Activated CD8-positive, alpha-beta T cell treated with anti-CD3 and anti-CD28 coated beads, Interleukin-2, amount 10 ng/mL, durations not matched to agents 7 days and 5 days (primary cell): ENCODE measurements at regions of chr1 and their contacts with region 1.

Region 1: DNA sequence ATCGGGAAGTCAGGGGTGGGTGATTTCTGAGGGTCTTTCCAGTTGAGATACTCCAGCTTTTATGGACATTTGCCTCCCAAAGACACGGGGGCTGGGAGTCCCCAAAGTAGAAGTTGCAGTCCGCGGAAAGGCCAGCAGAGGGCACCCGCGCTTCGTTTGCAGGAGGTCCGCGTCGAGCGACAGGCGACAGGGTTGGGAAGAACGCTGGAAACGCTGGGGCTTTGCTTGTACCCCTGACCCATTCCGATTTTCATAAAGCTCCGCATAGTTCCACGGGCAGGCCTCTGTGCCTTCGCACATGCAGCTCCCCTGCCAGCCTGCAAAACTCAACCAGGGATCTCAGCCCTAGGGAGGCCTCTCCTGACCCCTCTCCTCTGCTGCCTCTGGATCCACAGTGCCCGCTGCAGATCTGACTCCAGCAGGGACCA is 44.2 kb upstream of the LAPTM5 start:
- DNase-seq: peak; percentile 83
- ATAC-seq: peak; percentile 81
- H3K4me3 Mint-ChIP-seq: no peak overlapping the region
- H3K27ac Mint-ChIP-seq: no peak overlapping the region
- H3K4me1 Mint-ChIP-seq: peaks cover 7% of the 10 kb centered on the region
- H3K27me3 Mint-ChIP-seq: peaks cover 44% of the 10 kb centered on the region

Region 2: GRCh38 chr1:30718636-30719405 is 83.0 kb before region 1 on chr1:
- CTCF ChIA-PET with region 1: interaction called, 30 read pairs
- POLR2A ChIA-PET with region 1: no interaction called
- DNase-seq: peak; percentile 86
- ATAC-seq: peak; percentile 74
- H3K4me3 Mint-ChIP-seq: peak overlapping the region; percentile 84
- H3K27ac Mint-ChIP-seq: peak overlapping the region; percentile 97
- H3K4me1 Mint-ChIP-seq: peaks cover 24% of the 10 kb centered on the region
- H3K27me3 Mint-ChIP-seq: no peaks in the 10 kb centered on the region

Region 3: GRCh38 chr1:30818568-30819243 is 16.9 kb after region 1 on chr1:
- CTCF ChIA-PET with region 1: interaction called, 10 read pairs
- POLR2A ChIA-PET with region 1: no interaction called
- DNase-seq: no peak
- ATAC-seq: no peak
- H3K4me3 Mint-ChIP-seq: no peak overlapping the region
- H3K27ac Mint-ChIP-seq: no peak overlapping the region
- H3K4me1 Mint-ChIP-seq: peaks cover 9% of the 10 kb centered on the region
- H3K27me3 Mint-ChIP-seq: peaks cover 49% of the 10 kb centered on the region

Region 4: DNA sequence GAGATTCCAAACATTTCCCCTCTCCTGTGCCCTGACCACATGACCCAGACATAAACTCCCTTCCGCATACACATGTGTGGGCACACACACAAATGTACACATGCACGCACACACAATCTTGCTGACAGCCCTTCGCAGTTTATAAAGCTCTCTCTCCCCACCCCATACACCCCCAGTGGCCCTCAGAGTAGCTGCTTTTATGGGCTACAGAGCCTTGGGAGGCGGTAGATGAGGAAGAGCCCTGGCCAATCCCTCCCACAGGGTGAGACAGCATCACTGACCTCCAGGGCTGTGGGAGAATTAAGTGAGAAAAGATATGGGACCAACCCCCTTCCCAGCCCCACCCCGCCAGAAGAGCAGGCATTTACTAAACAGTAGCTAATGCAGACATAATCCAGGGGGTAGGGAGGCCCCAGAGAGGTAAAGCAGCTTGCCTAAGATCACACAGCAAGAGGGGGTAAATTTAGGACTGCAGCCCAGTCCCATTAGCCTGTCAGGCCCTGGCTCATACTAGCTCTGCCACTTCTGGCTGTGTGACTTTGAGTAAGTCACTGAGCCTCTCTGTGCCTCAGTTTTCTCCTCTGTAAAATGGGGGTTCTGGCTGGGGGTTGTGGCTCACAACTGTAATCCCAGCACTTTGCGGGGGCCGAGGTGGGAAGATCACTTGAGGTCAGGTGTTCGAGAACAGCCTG is 101.7 kb after region 1 on chr1:
- CTCF ChIA-PET with region 1: interaction called, 11 read pairs
- POLR2A ChIA-PET with region 1: no interaction called
- DNase-seq: no peak
- ATAC-seq: no peak
- H3K4me3 Mint-ChIP-seq: no peak overlapping the region
- H3K27ac Mint-ChIP-seq: no peak overlapping the region
- H3K4me1 Mint-ChIP-seq: peaks cover 6% of the 10 kb centered on the region
- H3K27me3 Mint-ChIP-seq: peaks cover 31% of the 10 kb centered on the region

Region 5: DNA sequence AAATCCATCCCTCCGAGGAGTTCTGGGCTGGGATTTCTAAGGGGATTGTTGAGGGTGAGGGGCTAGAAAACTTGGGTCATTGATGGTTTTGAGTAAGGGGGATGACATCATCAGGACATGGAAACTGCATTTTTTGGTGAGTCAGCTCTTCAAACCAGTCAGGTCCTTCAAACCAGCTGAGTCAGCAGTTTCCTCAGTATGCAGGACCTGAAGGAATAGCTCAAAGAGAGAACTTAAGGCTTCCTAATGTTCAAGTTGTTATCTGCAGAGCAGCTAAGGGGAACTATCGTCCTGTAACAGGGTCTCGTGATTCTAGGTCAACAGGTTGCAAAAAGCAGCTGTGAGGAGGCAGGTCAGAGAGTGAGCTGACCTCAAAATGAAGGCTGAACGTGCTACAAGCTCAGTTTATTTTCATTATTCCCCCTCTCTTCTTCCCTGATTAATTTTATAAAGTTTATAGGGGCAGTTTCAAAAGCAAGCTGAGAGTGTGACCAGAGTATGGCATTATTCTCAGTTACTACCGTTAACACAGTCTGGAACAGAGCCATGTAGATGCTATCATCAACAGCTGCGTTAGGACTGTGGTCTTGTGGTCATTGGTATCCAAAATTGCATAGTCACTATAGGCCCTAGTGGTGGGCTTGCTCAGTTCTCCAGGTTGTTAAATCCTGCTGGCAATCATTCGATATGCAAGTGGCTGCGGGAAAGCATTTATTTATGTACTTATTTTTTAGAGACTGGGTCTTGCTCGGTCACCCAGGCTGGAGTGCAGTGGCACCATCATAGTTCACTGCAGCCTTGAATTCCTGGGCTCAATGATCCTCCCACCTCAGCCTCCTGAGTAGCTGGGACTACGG is 117.5 kb after region 1 on chr1:
- CTCF ChIA-PET with region 1: interaction called, 108 read pairs
- POLR2A ChIA-PET with region 1: no interaction called
- DNase-seq: no peak
- ATAC-seq: no peak
- H3K4me3 Mint-ChIP-seq: no peak overlapping the region
- H3K27ac Mint-ChIP-seq: no peak overlapping the region
- H3K4me1 Mint-ChIP-seq: peaks cover 3% of the 10 kb centered on the region
- H3K27me3 Mint-ChIP-seq: peaks cover 22% of the 10 kb centered on the region